ENCODE measurements at regions of chr17 and their contacts with region 1.

Region 1: GRCh38 chr17:8222630-8223356 is 12.4 kb upstream of the AURKB start:
- DNase-seq: peak; percentile 96
- H3K4me3 ChIP-seq: peak overlapping the region; percentile 85
- H3K27ac ChIP-seq: peak overlapping the region; percentile 95
- H3K4me1 ChIP-seq: peaks cover 13% of the 10 kb centered on the region
- H3K27me3 ChIP-seq: no peaks in the 10 kb centered on the region
- CTCF ChIP-seq: no peak

Region 2: DNA sequence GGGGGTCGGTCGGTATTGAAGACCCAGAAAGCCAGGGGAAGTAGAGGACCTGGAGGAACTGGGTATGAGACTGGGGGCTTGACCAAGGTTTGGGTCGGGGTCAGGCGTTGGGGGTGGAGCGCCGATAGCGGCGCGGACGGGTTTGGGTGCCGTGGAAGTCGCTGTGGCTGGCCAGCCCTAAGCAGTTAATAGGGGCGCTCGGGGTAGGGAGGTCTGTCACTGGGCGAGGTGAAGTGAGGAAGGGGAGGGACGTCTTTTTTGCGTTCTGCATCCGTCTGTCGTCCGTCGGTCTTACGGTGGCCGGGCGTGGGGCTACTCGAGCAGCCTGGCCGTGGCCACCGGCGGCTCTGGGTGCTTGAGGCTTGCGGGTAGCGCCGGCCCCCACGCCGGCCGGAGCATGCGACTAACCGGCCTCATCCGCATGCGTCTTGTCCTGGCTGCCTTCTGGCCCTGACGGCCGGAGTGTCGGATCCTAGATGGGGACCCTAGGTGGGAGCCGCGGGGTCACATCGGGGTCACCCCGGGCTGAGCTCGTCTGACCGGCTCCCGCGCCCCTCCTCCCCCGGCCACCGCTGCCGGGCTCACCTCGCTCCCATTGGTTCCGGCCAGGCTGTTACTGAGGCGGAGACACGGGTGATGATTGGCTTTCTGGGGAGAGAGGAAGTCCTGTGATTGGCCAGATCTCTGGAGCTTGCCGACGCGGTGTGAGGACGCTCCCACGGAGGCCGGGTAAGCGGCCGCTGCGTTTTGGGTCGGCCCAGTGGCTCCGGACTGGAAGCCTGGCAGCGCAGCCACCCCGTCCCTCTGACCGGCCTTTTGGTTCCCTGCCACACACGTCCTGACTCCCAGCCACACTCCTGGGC is 378.3 kb before region 1 on chr17:
- CTCF ChIA-PET with region 1: no interaction called
- POLR2A ChIA-PET with region 1: no interaction called
- intact Hi-C with region 1: loop called (anchors 5 kb)
- DNase-seq: peak; percentile 94
- H3K4me3 ChIP-seq: peak overlapping the region; percentile 81
- H3K27ac ChIP-seq: peak overlapping the region; percentile 97
- H3K4me1 ChIP-seq: peaks cover 26% of the 10 kb centered on the region
- H3K27me3 ChIP-seq: no peaks in the 10 kb centered on the region
- CTCF ChIP-seq: no peak

Region 3: GRCh38 chr17:8126531-8127066 is 96.2 kb before region 1 on chr17:
- CTCF ChIA-PET with region 1: no interaction called
- POLR2A ChIA-PET with region 1: no interaction called
- intact Hi-C with region 1: loop called (anchors 1 kb)
- DNase-seq: peak; percentile 74
- H3K4me3 ChIP-seq: peak overlapping the region; percentile 68
- H3K27ac ChIP-seq: peak overlapping the region; percentile 58
- H3K4me1 ChIP-seq: peaks cover 6% of the 10 kb centered on the region
- H3K27me3 ChIP-seq: no peaks in the 10 kb centered on the region
- CTCF ChIP-seq: no peak

Region 4: GRCh38 chr17:8186787-8187516 is 35.8 kb before region 1 on chr17:
- CTCF ChIA-PET with region 1: no interaction called
- POLR2A ChIA-PET with region 1: no interaction called
- intact Hi-C with region 1: loop called (anchors 1 kb)
- DNase-seq: peak; percentile 98
- H3K4me3 ChIP-seq: peak overlapping the region; percentile 82
- H3K27ac ChIP-seq: peak overlapping the region; percentile 85
- H3K4me1 ChIP-seq: peaks cover 21% of the 10 kb centered on the region
- H3K27me3 ChIP-seq: no peaks in the 10 kb centered on the region
- CTCF ChIP-seq: peak; percentile 49

Region 5: GRCh38 chr17:8248751-8249607 is 26.2 kb after region 1 on chr17 and contains the start of gene PFAS:
- CTCF ChIA-PET with region 1: interaction called, 11 read pairs
- POLR2A ChIA-PET with region 1: no interaction called
- intact Hi-C with region 1: loop called (anchors 1 kb)
- DNase-seq: peak; percentile 96
- H3K4me3 ChIP-seq: peak within 1 kb of the TSS; percentile 83
- H3K27ac ChIP-seq: peak within 1 kb of the TSS; percentile 97
- H3K4me1 ChIP-seq: peaks cover 10% of the 10 kb centered on the region
- H3K27me3 ChIP-seq: no peaks in the 10 kb centered on the region
- CTCF ChIP-seq: no peak
- total RNA-seq, gene PFAS: 163 and 165 TPM in 2 replicates

Measured in A673 (cell line).